Activated CD4-positive, alpha-beta T cell treated with anti-CD3 and anti-CD28 coated beads, Interleukin-2, amount 10 ng/mL, durations not matched to agents 7 days and 5 days (primary cell): ENCODE measurements at regions of chr11 and their contacts with region 1.

Region 1: GRCh38 chr11:118290923-118291322 is 13.6 kb upstream of the CD3E start:
- DNase-seq: peak; percentile 63
- H3K4me3 Mint-ChIP-seq: no peak overlapping the region
- H3K27ac Mint-ChIP-seq: no peak overlapping the region
- H3K4me1 Mint-ChIP-seq: peaks cover 19% of the 10 kb centered on the region
- H3K27me3 Mint-ChIP-seq: no peaks in the 10 kb centered on the region

Region 2: GRCh38 chr11:118117790-118118601 is 172.9 kb before region 1 on chr11:
- CTCF ChIA-PET with region 1: no interaction called
- POLR2A ChIA-PET with region 1: interaction called, 11 read pairs
- DNase-seq: no peak
- H3K4me3 Mint-ChIP-seq: no peak overlapping the region
- H3K27ac Mint-ChIP-seq: no peak overlapping the region
- H3K4me1 Mint-ChIP-seq: peaks cover 13% of the 10 kb centered on the region
- H3K27me3 Mint-ChIP-seq: peaks cover 22% of the 10 kb centered on the region